WTC11 (cell line): ENCODE measurements at regions of chr1 and their contacts with region 1.

Region 1: DNA sequence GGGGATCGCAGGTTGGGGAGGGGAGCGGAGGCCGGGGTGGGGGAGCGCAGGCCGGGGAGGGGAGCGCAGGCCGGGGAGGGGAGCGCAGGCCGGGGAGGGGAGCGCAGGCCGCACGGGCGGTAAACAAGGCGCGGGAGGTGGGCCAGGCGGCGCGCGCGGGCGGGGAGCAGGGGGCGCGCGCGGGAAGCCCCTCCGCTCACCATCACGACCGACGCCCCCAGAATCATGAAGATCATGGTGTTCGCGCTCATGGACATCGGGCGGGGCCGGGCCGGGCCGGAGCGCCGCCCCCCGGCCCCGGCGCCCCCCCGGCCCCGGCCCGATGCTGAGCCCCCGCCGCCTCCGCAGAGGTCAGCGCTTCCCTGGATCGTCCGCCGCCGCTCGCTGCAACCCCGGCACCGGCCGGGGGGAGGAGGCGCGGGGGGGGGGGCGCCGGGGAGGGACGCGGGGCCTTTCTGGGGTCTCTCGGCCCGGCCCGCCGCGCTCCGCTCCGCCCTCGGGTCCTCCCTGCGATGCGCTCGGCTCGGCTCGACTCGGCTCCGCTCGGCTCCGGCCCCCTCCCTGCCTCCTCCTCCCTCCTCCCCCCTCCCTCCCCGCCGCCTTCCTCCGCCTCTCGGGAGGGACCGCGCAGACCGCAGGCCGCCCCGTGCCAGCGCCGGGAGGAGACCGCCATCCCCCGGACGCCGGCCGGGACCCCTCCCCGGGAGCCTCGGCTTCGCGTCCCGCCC is at the start of gene TMEM240:
- DNase-seq: peak; percentile 88
- ATAC-seq: peak; percentile 79
- H3K4me3 Mint-ChIP-seq: peak within 1 kb of the TSS; percentile 71
- H3K27ac Mint-ChIP-seq: no peak within 1 kb of the TSS
- H3K4me1 Mint-ChIP-seq: peaks cover 3% of the 10 kb centered on the region; the same call in 1 of the 2 replicates
- H3K27me3 Mint-ChIP-seq: no peaks in the 10 kb centered on the region
- CTCF ChIP-seq: no peak
- total RNA-seq, gene TMEM240: 6.6 to 8.8 TPM (median 8.0 TPM) in 3 replicates

Region 2: DNA sequence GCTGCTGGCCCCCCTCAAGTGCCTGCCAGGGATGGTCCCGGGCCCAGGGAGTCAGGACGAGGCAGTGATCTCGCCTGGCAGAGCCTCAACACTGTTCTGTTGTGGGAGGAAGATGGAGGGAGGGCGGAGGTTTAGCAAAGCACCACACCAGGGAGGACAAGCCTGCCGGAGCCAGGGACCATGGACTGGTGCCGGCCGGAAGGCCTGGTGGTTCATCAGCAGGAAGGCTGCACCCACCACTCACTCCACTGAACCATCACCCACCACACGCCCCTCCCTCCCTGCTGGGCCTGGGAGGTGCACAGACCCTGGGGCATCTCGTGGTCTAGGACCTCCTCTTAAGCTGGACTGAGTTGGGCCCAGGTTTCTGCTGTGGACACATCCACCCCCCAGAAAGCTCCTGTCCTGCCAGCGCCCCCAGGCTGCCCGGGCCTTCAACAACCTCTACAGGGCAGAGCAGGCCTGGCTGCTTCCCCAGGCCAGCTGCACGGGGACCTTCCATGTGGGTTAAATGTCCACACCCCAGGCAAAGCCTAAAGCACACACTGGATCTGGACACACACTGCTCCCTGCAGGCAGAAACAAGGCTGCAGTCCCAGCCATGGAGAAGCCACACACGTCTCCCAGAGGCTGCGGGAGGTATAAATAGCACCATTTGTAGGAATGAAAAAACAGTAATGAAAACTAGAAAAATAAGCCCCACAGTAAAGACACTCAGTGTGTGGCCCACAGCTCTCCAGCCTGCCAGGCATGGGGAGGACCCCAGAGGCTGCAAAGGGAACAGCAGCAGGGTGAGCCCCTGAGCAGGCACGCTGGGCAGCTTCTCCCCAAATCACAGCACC is 10.6 kb after region 1 on chr1:
- CTCF ChIA-PET with region 1: interaction called, 11 read pairs
- POLR2A ChIA-PET with region 1: no interaction called
- DNase-seq: no peak
- ATAC-seq: peak; percentile 50
- H3K4me3 Mint-ChIP-seq: no peak overlapping the region
- H3K27ac Mint-ChIP-seq: 0 out of 2 replicates have a peak overlapping the region, but pooled peaks have one; percentile 36
- H3K4me1 Mint-ChIP-seq: no peaks in the 10 kb centered on the region
- H3K27me3 Mint-ChIP-seq: no peaks in the 10 kb centered on the region; the same call in 1 of the 2 replicates
- CTCF ChIP-seq: no peak